Activated CD8-positive, alpha-beta T cell treated with anti-CD3 and anti-CD28 coated beads, Interleukin-2, amount 10 ng/mL, durations not matched to agents 7 days and 5 days (primary cell): ENCODE measurements at regions of chr2 and their contacts with region 1.

Region 1: DNA sequence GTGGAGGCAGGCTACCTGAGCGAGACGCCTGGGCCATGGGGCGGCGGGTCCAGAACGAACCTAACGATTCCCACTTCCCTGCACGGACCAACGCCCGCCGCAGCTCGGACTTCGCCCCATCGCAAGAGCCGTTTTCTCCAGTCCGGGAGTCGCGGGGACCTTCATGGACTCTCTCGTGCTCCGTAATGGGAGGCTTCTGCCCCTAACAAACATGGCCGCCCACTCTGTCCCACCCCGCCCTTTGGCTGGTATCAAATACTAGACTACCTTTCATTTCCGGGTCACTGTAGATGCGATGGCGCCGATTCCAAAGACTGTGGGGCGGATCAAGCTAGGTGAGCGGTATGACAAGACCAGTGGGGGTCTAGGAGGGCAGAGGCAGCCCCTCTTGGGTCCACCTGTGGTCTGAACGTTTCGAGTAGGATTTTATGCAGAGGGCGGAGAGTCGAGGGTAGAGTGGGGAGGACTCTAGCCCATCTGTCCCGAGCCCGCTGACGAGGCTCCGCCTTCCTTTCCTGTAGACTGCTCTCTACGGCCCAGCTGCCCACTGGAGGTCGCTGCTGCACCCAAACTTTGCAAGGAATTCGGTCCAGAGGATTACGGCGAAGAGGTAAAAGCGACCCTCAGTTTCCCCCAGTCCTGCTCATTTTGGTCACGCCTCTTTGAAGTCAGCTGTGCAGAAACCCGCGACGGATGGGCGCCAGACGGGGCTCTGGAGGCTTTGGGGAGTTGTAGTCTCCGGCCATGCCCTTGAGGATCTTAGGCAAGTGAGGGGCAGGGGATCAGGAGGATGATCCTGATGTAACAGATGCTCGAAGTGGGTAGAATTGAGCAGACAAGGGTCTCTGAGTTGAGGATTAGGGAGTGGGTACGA is at the starts of genes CCDC142 and TTC31:
- DNase-seq: peak; percentile 97
- ATAC-seq: peak; percentile 95
- H3K4me3 Mint-ChIP-seq: peak within 1 kb of the TSS; percentile 100
- H3K27ac Mint-ChIP-seq: peak within 1 kb of the TSS; percentile 100
- H3K4me1 Mint-ChIP-seq: peaks cover 41% of the 10 kb centered on the region
- H3K27me3 Mint-ChIP-seq: no peaks in the 10 kb centered on the region
- total RNA-seq, gene CCDC142: 22.5 to 26.7 TPM
- total RNA-seq, gene TTC31: 38.3 to 40.0 TPM

Region 2: DNA sequence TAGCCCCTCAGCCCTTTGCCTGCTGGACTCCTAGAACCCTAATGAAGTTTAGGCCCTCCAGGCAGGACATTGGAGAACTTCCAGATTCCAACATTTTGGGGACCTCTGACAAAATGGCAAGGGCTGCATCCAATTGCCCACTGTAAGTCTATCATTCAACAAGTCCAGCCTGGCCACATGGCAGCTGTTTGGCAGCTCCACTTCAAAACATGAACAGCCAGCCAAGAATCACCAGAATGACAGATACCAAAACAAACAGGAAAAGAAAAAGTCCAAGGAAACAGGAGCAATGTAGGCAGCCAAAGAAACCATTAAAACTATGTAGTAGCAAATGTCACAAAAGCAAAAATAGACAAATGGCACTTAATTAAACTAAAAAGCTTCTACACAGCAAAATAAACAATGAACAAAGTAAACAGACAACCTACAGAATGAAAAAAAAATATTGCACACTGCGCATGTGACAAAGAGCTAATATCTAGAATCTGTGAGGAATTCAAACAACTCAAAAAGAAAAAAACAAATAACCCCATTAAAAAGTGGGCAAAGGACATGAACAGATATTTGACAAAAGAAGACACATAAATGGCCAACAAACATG is 165.2 kb before region 1 on chr2:
- CTCF ChIA-PET with region 1: no interaction called
- POLR2A ChIA-PET with region 1: no interaction called
- DNase-seq: no peak
- ATAC-seq: no peak
- H3K4me3 Mint-ChIP-seq: no peak overlapping the region
- H3K27ac Mint-ChIP-seq: no peak overlapping the region
- H3K4me1 Mint-ChIP-seq: no peaks in the 10 kb centered on the region
- H3K27me3 Mint-ChIP-seq: peaks cover 2% of the 10 kb centered on the region

Region 3: DNA sequence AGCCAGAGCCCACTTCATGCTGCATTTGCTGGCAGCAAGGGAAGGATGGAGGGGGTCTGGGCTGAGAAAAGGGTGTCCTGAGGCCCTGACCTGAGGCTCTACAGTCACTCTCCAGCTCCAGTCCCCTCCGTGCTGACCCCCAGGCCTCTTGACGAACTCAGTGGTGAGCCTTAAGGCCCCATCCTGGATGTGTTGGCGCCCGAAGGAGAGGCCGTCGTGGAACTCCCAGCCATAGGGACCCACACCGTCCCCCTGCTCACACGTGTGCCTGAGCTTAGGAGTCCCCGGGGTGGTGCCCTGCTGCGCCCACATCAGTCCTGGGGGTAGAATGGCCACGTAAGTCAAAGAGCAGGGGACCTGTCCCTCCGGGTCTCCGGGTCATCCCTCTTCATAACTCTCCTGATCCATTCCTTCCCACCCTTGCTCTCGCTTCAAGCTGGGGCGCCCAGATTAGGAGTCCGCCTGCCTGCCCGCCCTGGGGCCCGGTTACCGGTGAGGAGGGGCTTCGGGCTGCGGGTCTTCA is 18.6 kb before region 1 on chr2:
- CTCF ChIA-PET with region 1: interaction called, 8 read pairs
- POLR2A ChIA-PET with region 1: interaction called, 11 read pairs
- DNase-seq: no peak
- ATAC-seq: peak; percentile 3
- H3K4me3 Mint-ChIP-seq: peak overlapping the region; percentile 96
- H3K27ac Mint-ChIP-seq: peak overlapping the region; percentile 86
- H3K4me1 Mint-ChIP-seq: peaks cover 37% of the 10 kb centered on the region
- H3K27me3 Mint-ChIP-seq: no peaks in the 10 kb centered on the region

Region 4: GRCh38 chr2:74498500-74499266 is 15.6 kb after region 1 on chr2:
- CTCF ChIA-PET with region 1: interaction called, 18 read pairs
- POLR2A ChIA-PET with region 1: interaction called, 6 read pairs
- DNase-seq: peak; percentile 49
- ATAC-seq: peak; percentile 37
- H3K4me3 Mint-ChIP-seq: peak overlapping the region; percentile 80
- H3K27ac Mint-ChIP-seq: peak overlapping the region; percentile 83
- H3K4me1 Mint-ChIP-seq: peaks cover 45% of the 10 kb centered on the region
- H3K27me3 Mint-ChIP-seq: peaks cover 41% of the 10 kb centered on the region

Region 5: GRCh38 chr2:74522516-74522915 is 39.5 kb after region 1 on chr2:
- CTCF ChIA-PET with region 1: interaction called, 13 read pairs
- POLR2A ChIA-PET with region 1: interaction called, 7 read pairs
- DNase-seq: no peak
- ATAC-seq: no peak
- H3K4me3 Mint-ChIP-seq: no peak overlapping the region
- H3K27ac Mint-ChIP-seq: no peak overlapping the region
- H3K4me1 Mint-ChIP-seq: peaks cover 21% of the 10 kb centered on the region
- H3K27me3 Mint-ChIP-seq: peaks cover 36% of the 10 kb centered on the region

Region 6: GRCh38 chr2:74544634-74545033 is 61.6 kb after region 1 on chr2:
- CTCF ChIA-PET with region 1: interaction called, 11 read pairs
- POLR2A ChIA-PET with region 1: no interaction called
- DNase-seq: peak; percentile 38
- ATAC-seq: no peak
- H3K4me3 Mint-ChIP-seq: no peak overlapping the region
- H3K27ac Mint-ChIP-seq: no peak overlapping the region
- H3K4me1 Mint-ChIP-seq: peaks cover 15% of the 10 kb centered on the region
- H3K27me3 Mint-ChIP-seq: peaks cover 48% of the 10 kb centered on the region